ENCODE measurements at regions of chr9 and their contacts with region 1.

Region 1: GRCh38 chr9:137423004-137423874 is at the starts of genes EXD3 and NOXA1:
- DNase-seq: peak; percentile 98
- total RNA-seq, gene EXD3: 13.9 to 14.6 TPM
- total RNA-seq, gene NOXA1: 2.0 to 2.7 TPM

Region 2: GRCh38 chr9:137521405-137521985 is 98.3 kb after region 1 on chr9:
- intact Hi-C with region 1: loop called in 1 of 2 experiments (anchors 10 kb)
- DNase-seq: no peak